ENCODE measurements at regions of chr4 and their contacts with region 1.

Region 1: DNA sequence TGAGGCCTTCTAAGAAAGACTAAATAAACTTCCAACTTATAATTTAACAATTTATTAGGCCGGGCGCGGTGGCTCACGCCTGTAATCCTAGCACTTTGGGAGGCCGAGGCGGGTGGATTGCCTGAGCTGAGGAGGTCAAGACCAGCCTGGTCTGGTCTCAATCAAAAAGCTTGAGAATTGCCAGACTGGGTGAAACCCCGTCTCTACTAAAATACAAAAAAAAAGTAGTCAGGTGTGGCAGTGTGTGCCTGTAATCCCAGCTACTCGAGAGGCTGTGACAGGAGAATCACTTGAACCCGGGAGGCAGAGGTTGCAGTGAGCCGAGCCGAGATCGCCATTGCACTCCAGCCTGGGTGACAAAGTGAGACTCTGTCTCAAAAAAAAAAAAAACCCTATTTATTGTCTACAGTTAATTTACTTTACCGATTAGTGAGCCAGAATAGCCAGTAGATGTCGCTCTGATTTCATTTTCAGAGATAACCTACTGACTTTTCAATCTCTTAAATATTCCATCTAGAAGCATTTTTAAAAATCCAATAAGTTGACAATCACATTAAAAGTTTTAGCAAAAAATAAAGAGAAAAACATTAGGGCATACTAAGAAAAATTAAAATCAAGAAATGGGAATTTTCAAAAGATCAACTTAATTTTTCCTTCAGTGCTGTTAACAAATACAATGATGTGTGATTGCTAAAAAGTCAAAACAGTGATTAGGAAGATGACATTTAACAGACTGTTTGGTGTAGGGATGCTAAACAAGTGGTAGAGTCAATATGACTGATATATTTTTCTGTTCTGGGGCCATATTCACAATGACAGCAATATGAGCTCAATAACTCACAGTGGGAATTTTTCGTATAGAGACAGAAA is 4.3 kb upstream of the SHROOM3 start:
- DNase-seq: no peak
- H3K4me3 ChIP-seq: no peak overlapping the region
- H3K27ac ChIP-seq: no peak overlapping the region
- H3K4me1 ChIP-seq: peaks cover 0 to 29% (median 20%) of the 10 kb centered on the region in 4 donors
- H3K27me3 ChIP-seq: no peaks in the 10 kb centered on the region
- CTCF ChIP-seq: peak; percentile 71 to 74 (median 73)
- EP300 ChIP-seq: no peak
- POLR2A ChIP-seq: no peak

Region 2: GRCh38 chr4:76188557-76188956 is 242.2 kb before region 1 on chr4:
- intact Hi-C with region 1: no loop called
- DNase-seq: peak; percentile 29
- H3K4me3 ChIP-seq: no peak overlapping the region
- H3K27ac ChIP-seq: peak overlapping the region in 1 of 4 donors; percentile 18
- H3K4me1 ChIP-seq: peaks cover 28 to 45% (median 37%) of the 10 kb centered on the region in 4 donors
- H3K27me3 ChIP-seq: no peaks in the 10 kb centered on the region
- CTCF ChIP-seq: no peak
- EP300 ChIP-seq: no peak
- POLR2A ChIP-seq: no peak

Region 3: GRCh38 chr4:76504613-76505465 is 74.1 kb after region 1 on chr4:
- intact Hi-C with region 1: loop called (anchors 2 kb)
- DNase-seq: no peak
- H3K4me3 ChIP-seq: no peak overlapping the region
- H3K27ac ChIP-seq: no peak overlapping the region
- H3K4me1 ChIP-seq: peaks cover 0 to 10% (median 4%) of the 10 kb centered on the region in 4 donors
- H3K27me3 ChIP-seq: no peaks in the 10 kb centered on the region
- CTCF ChIP-seq: peak; percentile 69 to 74 (median 74)
- EP300 ChIP-seq: no peak
- POLR2A ChIP-seq: no peak

Region 4: GRCh38 chr4:76836860-76837562 is 406.3 kb after region 1 on chr4:
- intact Hi-C with region 1: no loop called
- DNase-seq: no peak
- H3K4me3 ChIP-seq: no peak overlapping the region
- H3K27ac ChIP-seq: no peak overlapping the region
- H3K4me1 ChIP-seq: peaks cover 0 to 4% (median 2%) of the 10 kb centered on the region in 4 donors
- H3K27me3 ChIP-seq: no peaks in the 10 kb centered on the region
- CTCF ChIP-seq: no peak
- EP300 ChIP-seq: no peak
- POLR2A ChIP-seq: no peak